Caco-2 (cell line): ENCODE measurements at regions of chr1 and their contacts with region 1.

Region 1: GRCh38 chr1:201254625-201255506 is 28.4 kb upstream of the PKP1 start:
- DNase-seq: peak; percentile 73 to 88
- H3K4me3 ChIP-seq: no peak overlapping the region
- H3K4me3 Mint-ChIP-seq: no peak overlapping the region
- H3K27ac Mint-ChIP-seq: no peak overlapping the region
- H3K4me1 ChIP-seq: no peaks in the 10 kb centered on the region
- H3K4me1 Mint-ChIP-seq: no peaks in the 10 kb centered on the region
- H3K27me3 ChIP-seq: no peaks in the 10 kb centered on the region; the same call in 1 of the 2 replicates
- H3K27me3 Mint-ChIP-seq: peaks cover 6% of the 10 kb centered on the region
- CTCF ChIP-seq: peak; percentile 97

Region 2: GRCh38 chr1:201191653-201192260 is 63.1 kb before region 1 on chr1:
- CTCF ChIA-PET with region 1: no interaction called
- POLR2A ChIA-PET with region 1: no interaction called
- intact Hi-C with region 1: no loop called
- DNase-seq: no peak
- H3K4me3 ChIP-seq: no peak overlapping the region
- H3K4me3 Mint-ChIP-seq: no peak overlapping the region
- H3K27ac Mint-ChIP-seq: no peak overlapping the region
- H3K4me1 ChIP-seq: no peaks in the 10 kb centered on the region
- H3K4me1 Mint-ChIP-seq: no peaks in the 10 kb centered on the region
- H3K27me3 ChIP-seq: no peaks in the 10 kb centered on the region; the same call in none of the 2 replicates
- H3K27me3 Mint-ChIP-seq: no peaks in the 10 kb centered on the region
- CTCF ChIP-seq: no peak

Region 3: DNA sequence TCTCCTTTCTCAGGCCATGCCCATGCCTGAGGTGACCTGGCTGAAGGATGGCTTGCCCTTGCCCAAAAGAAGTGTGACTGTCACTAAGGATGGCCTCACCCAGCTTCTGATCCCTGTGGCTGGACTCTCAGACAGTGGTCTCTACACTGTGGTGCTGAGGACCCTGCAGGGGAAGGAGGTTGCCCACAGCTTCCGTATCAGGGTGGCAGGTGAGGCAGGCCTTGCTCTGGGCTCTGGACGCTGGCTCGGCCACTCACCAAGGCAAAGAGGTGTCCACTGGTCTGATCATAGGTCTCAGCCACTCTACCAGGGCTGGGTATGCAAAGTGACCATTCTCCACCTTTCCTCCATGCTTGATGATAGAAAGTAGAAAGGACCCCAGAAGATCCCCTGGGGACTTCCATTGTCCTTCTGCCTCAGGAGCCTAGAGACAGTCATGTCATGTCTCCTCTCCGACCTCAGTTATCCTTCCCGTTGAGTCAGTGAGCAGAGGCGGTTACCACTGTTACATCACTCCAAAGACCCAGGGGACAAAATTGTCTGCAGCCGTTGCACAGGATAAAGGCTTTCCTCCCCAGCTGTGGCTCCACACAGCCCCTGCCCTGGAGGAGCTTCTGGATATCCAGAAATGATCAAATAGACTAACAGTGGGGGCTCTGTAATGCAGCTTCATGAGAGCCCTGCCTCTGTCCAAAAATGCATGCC is 30.0 kb before region 1 on chr1:
- CTCF ChIA-PET with region 1: no interaction called
- POLR2A ChIA-PET with region 1: no interaction called
- intact Hi-C with region 1: no loop called
- DNase-seq: no peak
- H3K4me3 ChIP-seq: no peak overlapping the region
- H3K4me3 Mint-ChIP-seq: no peak overlapping the region
- H3K27ac Mint-ChIP-seq: no peak overlapping the region
- H3K4me1 ChIP-seq: peaks cover 4% of the 10 kb centered on the region
- H3K4me1 Mint-ChIP-seq: peaks cover 7% of the 10 kb centered on the region
- H3K27me3 ChIP-seq: no peaks in the 10 kb centered on the region
- H3K27me3 Mint-ChIP-seq: no peaks in the 10 kb centered on the region
- CTCF ChIP-seq: no peak

Region 4: GRCh38 chr1:201309426-201309825 is 54.6 kb after region 1 on chr1:
- CTCF ChIA-PET with region 1: interaction called, 3 read pairs
- POLR2A ChIA-PET with region 1: no interaction called
- intact Hi-C with region 1: loop called (anchors 1 kb)
- DNase-seq: peak; percentile 84
- H3K4me3 ChIP-seq: no peak overlapping the region
- H3K4me3 Mint-ChIP-seq: no peak overlapping the region
- H3K27ac Mint-ChIP-seq: no peak overlapping the region
- H3K4me1 ChIP-seq: peaks cover 27% of the 10 kb centered on the region
- H3K4me1 Mint-ChIP-seq: peaks cover 8% of the 10 kb centered on the region
- H3K27me3 ChIP-seq: no peaks in the 10 kb centered on the region
- H3K27me3 Mint-ChIP-seq: peaks cover 5% of the 10 kb centered on the region
- CTCF ChIP-seq: peak; percentile 26 to 70

Region 5: GRCh38 chr1:201348211-201348566 is 93.3 kb after region 1 on chr1:
- CTCF ChIA-PET with region 1: interaction called, 3 read pairs
- POLR2A ChIA-PET with region 1: no interaction called
- intact Hi-C with region 1: loop called (anchors 1 kb)
- DNase-seq: peak; percentile 60 to 73
- H3K4me3 ChIP-seq: no peak overlapping the region
- H3K4me3 Mint-ChIP-seq: no peak overlapping the region
- H3K27ac Mint-ChIP-seq: no peak overlapping the region
- H3K4me1 ChIP-seq: no peaks in the 10 kb centered on the region
- H3K4me1 Mint-ChIP-seq: no peaks in the 10 kb centered on the region
- H3K27me3 ChIP-seq: no peaks in the 10 kb centered on the region; the same call in 1 of the 2 replicates
- H3K27me3 Mint-ChIP-seq: peaks cover 16% of the 10 kb centered on the region
- CTCF ChIP-seq: peak; percentile 42 to 74

Region 6: GRCh38 chr1:201408176-201408833 is 153.4 kb after region 1 on chr1:
- CTCF ChIA-PET with region 1: no interaction called
- POLR2A ChIA-PET with region 1: no interaction called
- intact Hi-C with region 1: loop called (anchors 2 kb)
- DNase-seq: peak; percentile 89 to 90
- H3K4me3 ChIP-seq: no peak overlapping the region
- H3K4me3 Mint-ChIP-seq: no peak overlapping the region
- H3K27ac Mint-ChIP-seq: peak overlapping the region; percentile 23
- H3K4me1 ChIP-seq: peaks cover 42% of the 10 kb centered on the region
- H3K4me1 Mint-ChIP-seq: peaks cover 11% of the 10 kb centered on the region
- H3K27me3 ChIP-seq: no peaks in the 10 kb centered on the region
- H3K27me3 Mint-ChIP-seq: no peaks in the 10 kb centered on the region
- CTCF ChIP-seq: peak; percentile 90 to 96